ENCODE measurements at regions of chr4 and their contacts with region 1.

Region 1: GRCh38 chr4:15677507-15677988 is 4.1 kb upstream of the FAM200B start:
- DNase-seq: peak; percentile 84
- H3K4me3 Mint-ChIP-seq: peak overlapping the region; percentile 51
- H3K27ac Mint-ChIP-seq: peak overlapping the region; percentile 53
- H3K4me1 Mint-ChIP-seq: no peaks in the 10 kb centered on the region
- H3K27me3 Mint-ChIP-seq: no peaks in the 10 kb centered on the region
- CTCF ChIP-seq: no peak

Region 2: DNA sequence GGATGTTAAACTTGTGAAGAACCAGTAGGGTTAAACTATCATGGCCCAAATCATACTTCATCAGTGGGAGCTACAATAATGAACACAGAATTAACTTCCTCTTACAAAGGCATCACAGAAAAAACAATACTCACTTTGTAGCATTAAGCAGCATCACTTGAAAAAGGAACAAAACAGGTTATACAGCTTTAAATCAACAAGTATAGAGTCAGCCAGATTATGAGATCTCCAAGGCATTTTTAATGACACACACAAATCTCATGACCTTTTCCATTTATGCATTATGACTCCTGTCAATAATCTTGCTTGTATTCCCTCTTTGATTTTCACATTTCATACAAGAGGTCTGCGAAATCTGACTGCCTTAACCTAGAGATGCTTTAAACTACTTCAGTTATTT is 40.7 kb before region 1 on chr4:
- CTCF ChIA-PET with region 1: interaction called, 3 read pairs
- intact Hi-C with region 1: loop called (anchors 5 kb)
- DNase-seq: no peak
- H3K4me3 Mint-ChIP-seq: no peak overlapping the region
- H3K27ac Mint-ChIP-seq: peak overlapping the region; percentile 77
- H3K4me1 Mint-ChIP-seq: peaks cover 7% of the 10 kb centered on the region
- H3K27me3 Mint-ChIP-seq: no peaks in the 10 kb centered on the region
- CTCF ChIP-seq: no peak

Region 3: GRCh38 chr4:15665753-15666365 is 11.7 kb before region 1 on chr4:
- CTCF ChIA-PET with region 1: interaction called, 3 read pairs
- intact Hi-C with region 1: loop called (anchors 1 kb)
- DNase-seq: peak; percentile 51
- H3K4me3 Mint-ChIP-seq: no peak overlapping the region
- H3K27ac Mint-ChIP-seq: peak overlapping the region; percentile 69
- H3K4me1 Mint-ChIP-seq: peaks cover 17% of the 10 kb centered on the region
- H3K27me3 Mint-ChIP-seq: no peaks in the 10 kb centered on the region
- CTCF ChIP-seq: no peak